ENCODE measurements at regions of chr14 and their contacts with region 1.

Region 1: GRCh38 chr14:99320105-99320572 is 48.1 kb upstream of the BCL11B start:
- DNase-seq: peak; percentile 85
- ATAC-seq: peak; percentile 86
- H3K4me3 Mint-ChIP-seq: no peak overlapping the region
- H3K27ac Mint-ChIP-seq: no peak overlapping the region
- H3K4me1 Mint-ChIP-seq: peaks cover 20% of the 10 kb centered on the region
- H3K27me3 Mint-ChIP-seq: peaks cover 3% of the 10 kb centered on the region

Region 2: GRCh38 chr14:99271951-99272631 is 48.0 kb before region 1 on chr14 and contains the start of gene BCL11B:
- CTCF ChIA-PET with region 1: no interaction called
- DNase-seq: peak; percentile 96
- ATAC-seq: peak; percentile 71
- H3K4me3 Mint-ChIP-seq: peak within 1 kb of the TSS; percentile 96
- H3K27ac Mint-ChIP-seq: peak within 1 kb of the TSS; percentile 99
- H3K4me1 Mint-ChIP-seq: peaks cover 26% of the 10 kb centered on the region
- H3K27me3 Mint-ChIP-seq: peaks cover 13% of the 10 kb centered on the region
- total RNA-seq, gene BCL11B: 53.0 to 66.2 TPM

Region 3: DNA sequence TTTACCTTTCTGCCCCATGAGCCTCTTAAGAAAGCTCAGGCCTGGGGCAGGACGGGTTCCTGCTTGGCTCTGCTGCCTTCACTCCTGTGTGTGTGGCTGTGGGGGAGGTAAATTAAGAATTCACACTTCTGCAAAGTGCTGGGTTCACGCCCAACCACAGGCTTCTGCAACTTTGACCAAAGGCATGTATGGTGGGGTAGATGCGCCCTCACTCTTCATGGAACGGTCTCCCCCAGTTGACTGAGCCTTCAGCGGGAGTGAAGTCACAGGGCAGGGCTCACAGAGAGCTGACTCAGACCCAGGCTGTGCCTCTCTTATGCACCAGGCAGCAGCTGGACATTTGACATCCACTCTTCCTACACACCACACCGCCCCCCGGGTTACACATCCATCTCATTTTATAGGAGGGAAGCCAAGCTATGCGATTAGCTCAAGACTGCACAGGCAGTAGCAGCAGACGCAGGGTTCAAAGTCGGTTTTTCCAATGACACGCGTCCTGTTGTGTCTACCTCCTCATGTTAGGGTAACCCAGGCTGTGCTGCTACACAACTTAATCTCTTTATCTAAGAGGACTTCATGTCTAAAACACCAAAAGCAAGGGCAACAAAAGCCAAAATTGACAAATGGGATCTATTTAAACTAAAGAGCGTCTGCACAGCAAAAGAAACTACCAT is 32.7 kb before region 1 on chr14:
- CTCF ChIA-PET with region 1: interaction called, 21 read pairs
- DNase-seq: peak; percentile 84
- ATAC-seq: peak; percentile 92
- H3K4me3 Mint-ChIP-seq: peak overlapping the region; percentile 80
- H3K27ac Mint-ChIP-seq: peak overlapping the region; percentile 92
- H3K4me1 Mint-ChIP-seq: peaks cover 26% of the 10 kb centered on the region
- H3K27me3 Mint-ChIP-seq: no peaks in the 10 kb centered on the region

Region 4: GRCh38 chr14:99304209-99304608 is 15.9 kb before region 1 on chr14:
- CTCF ChIA-PET with region 1: interaction called, 16 read pairs
- DNase-seq: no peak
- ATAC-seq: no peak
- H3K4me3 Mint-ChIP-seq: no peak overlapping the region
- H3K27ac Mint-ChIP-seq: no peak overlapping the region
- H3K4me1 Mint-ChIP-seq: peaks cover 3% of the 10 kb centered on the region
- H3K27me3 Mint-ChIP-seq: peaks cover 26% of the 10 kb centered on the region

Region 5: GRCh38 chr14:99342204-99342603 is 22.1 kb after region 1 on chr14:
- CTCF ChIA-PET with region 1: interaction called, 16 read pairs
- DNase-seq: no peak
- ATAC-seq: peak; percentile 23
- H3K4me3 Mint-ChIP-seq: no peak overlapping the region
- H3K27ac Mint-ChIP-seq: no peak overlapping the region
- H3K4me1 Mint-ChIP-seq: peaks cover 3% of the 10 kb centered on the region
- H3K27me3 Mint-ChIP-seq: peaks cover 29% of the 10 kb centered on the region

Region 6: DNA sequence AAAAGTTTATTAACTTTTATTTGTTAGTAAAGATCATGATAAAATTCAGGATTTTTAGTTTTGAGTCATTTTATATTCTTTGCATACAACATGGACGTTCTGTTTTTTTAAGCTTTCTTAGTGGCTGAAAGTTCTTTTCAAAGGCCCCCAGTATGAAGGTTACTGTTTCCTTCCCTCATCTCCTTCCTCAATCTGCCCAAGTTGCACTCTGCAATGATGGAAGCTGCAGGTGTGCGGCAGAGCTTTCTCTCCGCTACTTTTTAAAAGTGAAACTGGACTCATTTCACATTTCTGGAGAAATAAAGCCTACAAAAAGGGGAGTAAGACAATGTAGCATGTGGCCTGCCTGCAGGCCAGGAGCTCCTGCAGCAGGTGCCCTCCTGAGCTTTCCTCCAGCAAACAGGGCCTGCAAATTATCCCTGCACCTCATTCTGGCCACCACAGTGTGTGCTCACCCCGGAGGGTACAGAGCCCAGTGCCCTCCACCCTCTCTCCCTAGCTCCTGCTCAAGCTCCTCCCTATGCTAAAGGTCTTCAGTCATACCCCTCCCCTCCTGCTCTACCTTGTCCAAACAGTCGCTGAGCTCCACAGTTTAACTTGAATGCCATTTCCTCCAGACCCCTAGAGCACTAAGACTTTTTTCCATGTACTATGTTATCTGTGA is 81.6 kb after region 1 on chr14:
- CTCF ChIA-PET with region 1: interaction called, 13 read pairs
- DNase-seq: no peak
- ATAC-seq: no peak
- H3K4me3 Mint-ChIP-seq: no peak overlapping the region
- H3K27ac Mint-ChIP-seq: peak overlapping the region; percentile 34
- H3K4me1 Mint-ChIP-seq: peaks cover 27% of the 10 kb centered on the region
- H3K27me3 Mint-ChIP-seq: no peaks in the 10 kb centered on the region

Region 7: GRCh38 chr14:99518441-99519346 is 198.6 kb after region 1 on chr14:
- CTCF ChIA-PET with region 1: no interaction called
- DNase-seq: peak; percentile 85
- ATAC-seq: peak; percentile 83
- H3K4me3 Mint-ChIP-seq: no peak overlapping the region
- H3K27ac Mint-ChIP-seq: no peak overlapping the region
- H3K4me1 Mint-ChIP-seq: no peaks in the 10 kb centered on the region
- H3K27me3 Mint-ChIP-seq: no peaks in the 10 kb centered on the region

Measured in activated CD8-positive, alpha-beta memory T cell treated with anti-CD3 and anti-CD28 coated beads, Interleukin-2, amount 10 ng/mL, durations not matched to agents 7 days and 5 days (primary cell).